ENCODE measurements at regions of chr5 and their contacts with region 1.

Region 1: DNA sequence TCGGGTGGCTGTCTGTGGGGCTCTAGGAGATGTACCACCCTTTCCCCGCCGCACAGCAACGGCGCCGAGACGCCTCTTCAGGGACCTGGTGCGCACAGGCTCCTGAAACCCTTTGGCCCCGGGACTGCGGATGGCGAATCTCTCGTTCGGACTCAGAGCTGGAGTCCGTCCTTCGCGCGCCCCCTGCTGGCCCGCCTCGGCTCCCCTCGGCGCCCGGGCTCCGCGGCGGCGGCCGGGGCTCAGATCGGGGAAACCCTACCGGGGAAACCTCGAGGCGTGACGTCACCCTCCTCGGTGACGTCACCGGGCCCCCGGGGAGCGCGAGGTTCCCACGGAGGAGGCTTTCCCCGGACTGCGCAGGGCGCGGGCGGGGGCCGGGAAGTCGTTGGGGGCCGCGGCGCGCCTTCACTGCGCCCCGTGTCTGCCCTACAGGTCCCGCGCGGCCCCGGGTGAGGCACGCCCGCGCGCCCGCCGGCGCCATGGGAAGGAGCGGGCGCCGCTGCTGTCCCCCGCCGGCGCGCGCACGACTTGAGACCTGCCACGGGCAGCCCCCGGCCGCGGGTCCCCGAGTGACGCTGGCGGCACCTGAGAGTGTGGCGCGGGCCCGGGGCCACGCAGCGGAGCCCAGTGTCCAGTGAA is 7.9 kb downstream of the PRR7 start:
- DNase-seq: peak; percentile 99
- H3K4me3 ChIP-seq: peak overlapping the region; percentile 61 to 83 (median 71)
- H3K27ac ChIP-seq: peak overlapping the region; percentile 76 to 95 (median 90)
- H3K4me1 ChIP-seq: peaks cover 11 to 57% (median 41%) of the 10 kb centered on the region in 6 donors
- H3K27me3 ChIP-seq: peaks cover 0 to 19% (median 0%) of the 10 kb centered on the region in 7 donors
- CTCF ChIP-seq: peak; percentile 93 to 100 (median 98)
- POLR2A ChIP-seq: no peak

Region 2: DNA sequence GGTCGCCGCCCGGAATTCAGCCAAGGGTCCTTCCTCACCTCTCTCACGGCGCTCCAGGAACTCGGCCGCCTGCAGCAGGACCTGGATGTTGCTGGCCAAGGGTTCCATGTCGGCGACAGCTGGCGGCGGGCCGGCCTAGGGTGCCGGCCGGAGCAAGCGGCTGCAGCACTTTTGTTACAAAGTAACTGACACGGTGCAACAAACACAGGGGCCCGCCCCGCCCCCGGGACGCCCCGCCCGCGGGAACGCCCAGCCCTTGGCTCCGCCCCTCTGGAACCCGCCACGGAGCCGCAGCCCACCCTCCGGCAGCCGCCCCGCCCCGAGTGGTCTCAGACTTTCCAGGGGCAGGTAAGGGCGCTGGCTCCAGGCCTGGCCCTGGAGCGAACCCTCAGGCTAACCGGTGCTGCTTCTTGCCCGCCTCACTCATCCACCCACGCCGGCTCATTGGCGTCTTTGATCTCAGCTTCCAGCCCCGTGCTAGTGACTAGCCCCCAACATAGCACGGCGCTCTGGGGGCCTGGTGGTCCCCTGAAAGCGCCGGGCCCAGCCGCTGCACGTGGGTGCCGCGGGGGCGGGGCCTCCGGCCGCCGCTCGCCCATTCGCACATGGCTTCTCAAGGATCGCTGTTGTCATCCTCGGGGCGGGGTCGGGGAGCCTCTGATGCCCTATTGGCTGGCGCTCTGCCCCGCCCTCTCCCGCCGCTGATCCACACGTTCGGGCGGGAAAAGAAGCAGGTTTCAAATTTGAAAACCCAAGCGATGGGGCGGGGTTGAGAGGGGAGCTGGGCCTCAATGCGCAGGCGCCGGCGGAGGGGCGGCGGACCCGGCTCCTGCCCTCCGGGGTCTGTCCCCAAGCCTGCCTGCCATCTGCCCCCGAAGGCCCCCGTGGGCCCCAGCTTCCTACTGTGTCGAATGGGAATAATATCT is 142.5 kb before region 1 on chr5 and contains the start of gene MXD3:
- intact Hi-C with region 1: loop called (anchors 10 kb)
- DNase-seq: peak; percentile 97
- H3K4me3 ChIP-seq: peak within 1 kb of the TSS; percentile 35 to 89 (median 70)
- H3K27ac ChIP-seq: peak within 1 kb of the TSS in 7 of 8 donors; percentile 36 to 94 (median 87)
- H3K4me1 ChIP-seq: peaks cover 34 to 85% (median 71%) of the 10 kb centered on the region in 6 donors
- H3K27me3 ChIP-seq: no peaks in the 10 kb centered on the region
- CTCF ChIP-seq: no peak
- POLR2A ChIP-seq: no peak
- total RNA-seq, gene MXD3: 19.3 to 80.7 (median 26.7) TPM

Region 3: DNA sequence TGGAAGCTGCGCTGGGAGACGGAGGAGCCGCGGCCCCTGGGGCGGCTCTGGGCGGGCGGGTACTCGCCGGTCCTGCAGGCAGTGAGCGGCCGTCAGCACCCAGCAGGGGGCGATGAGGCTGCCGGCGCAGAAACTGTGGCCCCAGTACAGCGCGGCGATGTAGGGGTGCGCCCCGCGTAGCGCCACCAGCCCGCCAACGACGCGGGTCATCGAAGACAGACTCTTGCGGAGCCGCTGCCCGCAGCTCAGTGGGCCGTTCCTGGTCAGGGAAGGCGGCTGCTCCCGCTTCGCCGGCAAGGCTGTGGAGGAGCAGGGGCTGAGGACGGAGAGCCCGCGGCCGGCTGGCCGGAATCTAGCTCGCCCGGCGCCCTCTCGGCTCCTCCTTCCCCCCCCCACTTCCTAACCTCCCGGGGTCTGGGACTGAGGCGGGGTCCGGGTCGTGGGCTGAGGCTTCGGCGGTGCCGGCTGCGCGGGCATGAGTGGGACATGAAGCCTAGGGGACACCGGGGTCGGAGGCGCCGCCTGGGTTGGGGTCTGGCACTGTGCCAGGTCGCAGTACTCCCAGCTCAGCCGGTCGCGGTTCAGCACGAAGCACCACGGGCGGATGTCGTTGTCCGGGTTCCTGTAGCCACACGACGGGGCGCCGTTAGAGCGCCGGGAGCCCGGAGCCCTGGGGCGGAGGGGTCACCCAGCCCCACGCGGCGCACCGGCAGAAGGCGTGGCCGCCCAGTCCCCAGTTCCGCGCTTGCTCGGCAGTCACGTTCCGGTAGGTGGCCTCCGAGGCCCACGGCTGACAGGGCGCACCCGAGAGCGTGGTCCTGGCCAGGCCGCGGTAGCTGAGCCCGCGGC is 50.5 kb before region 1 on chr5:
- intact Hi-C with region 1: loop called (anchors 5 kb)
- DNase-seq: peak; percentile 98
- H3K4me3 ChIP-seq: peak overlapping the region; percentile 46 to 86 (median 60)
- H3K27ac ChIP-seq: peak overlapping the region in 7 of 8 donors; percentile 29 to 84 (median 57)
- H3K4me1 ChIP-seq: peaks cover 33 to 61% (median 51%) of the 10 kb centered on the region in 6 donors
- H3K27me3 ChIP-seq: peaks cover 0 to 52% (median 43%) of the 10 kb centered on the region in 7 donors
- CTCF ChIP-seq: peak; percentile 80 to 92 (median 85)
- POLR2A ChIP-seq: no peak

Measured in spleen (tissue), 13 donors.